Caco-2 (cell line): ENCODE measurements at regions of chr22 and their contacts with region 1.

Region 1: DNA sequence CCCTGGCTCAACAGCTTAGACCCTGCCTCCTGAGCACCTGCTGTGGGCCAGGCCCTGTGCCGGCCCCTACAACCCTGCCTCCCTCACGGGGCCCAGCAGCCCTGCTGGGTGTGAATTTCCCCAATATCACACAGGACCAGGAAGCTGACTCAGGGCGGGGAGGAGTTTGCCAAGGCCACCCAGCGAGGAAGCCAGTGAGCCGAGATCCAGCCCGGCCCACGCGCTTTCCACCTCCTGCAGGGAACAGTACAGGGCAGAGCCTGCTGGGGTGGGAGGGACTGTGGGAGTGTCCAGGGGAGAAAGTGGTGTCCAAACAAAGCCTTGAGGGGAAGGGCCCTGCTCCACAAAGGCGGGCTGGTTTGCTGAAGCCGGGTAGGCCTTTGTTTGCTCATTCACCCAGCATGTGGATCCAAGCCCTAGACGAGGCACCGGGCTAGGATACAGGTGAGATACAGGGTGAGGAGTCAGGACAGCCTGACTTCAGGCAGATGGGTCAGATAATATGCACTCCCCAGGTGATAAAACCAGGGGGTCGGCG is 26.8 kb downstream of the RPL3 start:
- DNase-seq: peak; percentile 66 to 82
- H3K4me3 ChIP-seq: no peak overlapping the region
- H3K4me3 Mint-ChIP-seq: peak overlapping the region; percentile 29
- H3K27ac Mint-ChIP-seq: peak overlapping the region; percentile 86
- H3K4me1 ChIP-seq: peaks cover 47% of the 10 kb centered on the region
- H3K4me1 Mint-ChIP-seq: peaks cover 24% of the 10 kb centered on the region
- H3K27me3 ChIP-seq: no peaks in the 10 kb centered on the region
- H3K27me3 Mint-ChIP-seq: no peaks in the 10 kb centered on the region
- CTCF ChIP-seq: no peak

Region 2: GRCh38 chr22:39144101-39144767 is 148.4 kb before region 1 on chr22:
- CTCF ChIA-PET with region 1: no interaction called
- POLR2A ChIA-PET with region 1: no interaction called
- intact Hi-C with region 1: no loop called
- DNase-seq: no peak
- H3K4me3 ChIP-seq: no peak overlapping the region
- H3K4me3 Mint-ChIP-seq: peak overlapping the region; percentile 67
- H3K27ac Mint-ChIP-seq: no peak overlapping the region
- H3K4me1 ChIP-seq: peaks cover 11% of the 10 kb centered on the region; the same call in 1 of the 2 replicates
- H3K4me1 Mint-ChIP-seq: no peaks in the 10 kb centered on the region
- H3K27me3 ChIP-seq: no peaks in the 10 kb centered on the region
- H3K27me3 Mint-ChIP-seq: no peaks in the 10 kb centered on the region
- CTCF ChIP-seq: no peak

Region 3: GRCh38 chr22:39253435-39254070 is 39.1 kb before region 1 on chr22:
- CTCF ChIA-PET with region 1: no interaction called
- POLR2A ChIA-PET with region 1: no interaction called
- intact Hi-C with region 1: loop called (anchors 5 kb)
- DNase-seq: no peak
- H3K4me3 ChIP-seq: no peak overlapping the region
- H3K4me3 Mint-ChIP-seq: no peak overlapping the region
- H3K27ac Mint-ChIP-seq: no peak overlapping the region
- H3K4me1 ChIP-seq: 0 out of 2 replicates have a peak, but pooled peaks cover 4% of the 10 kb centered on the region
- H3K4me1 Mint-ChIP-seq: peaks cover 9% of the 10 kb centered on the region
- H3K27me3 ChIP-seq: no peaks in the 10 kb centered on the region
- H3K27me3 Mint-ChIP-seq: no peaks in the 10 kb centered on the region
- CTCF ChIP-seq: no peak

Region 4: GRCh38 chr22:39674536-39674935 is 381.9 kb after region 1 on chr22:
- CTCF ChIA-PET with region 1: no interaction called
- POLR2A ChIA-PET with region 1: no interaction called
- intact Hi-C with region 1: no loop called
- DNase-seq: no peak
- H3K4me3 ChIP-seq: no peak overlapping the region
- H3K4me3 Mint-ChIP-seq: no peak overlapping the region
- H3K27ac Mint-ChIP-seq: no peak overlapping the region
- H3K4me1 ChIP-seq: no peaks in the 10 kb centered on the region
- H3K4me1 Mint-ChIP-seq: peaks cover 6% of the 10 kb centered on the region
- H3K27me3 ChIP-seq: no peaks in the 10 kb centered on the region
- H3K27me3 Mint-ChIP-seq: peaks cover 9% of the 10 kb centered on the region
- CTCF ChIP-seq: no peak